ENCODE measurements at regions of chr14 and their contacts with region 1.

Region 1: GRCh38 chr14:93655078-93655750 is 133.1 kb downstream of the PRIMA1 start:
- DNase-seq: peak; percentile 3
- H3K4me3 ChIP-seq: no peak overlapping the region
- CTCF ChIP-seq: peak; percentile 27

Region 2: DNA sequence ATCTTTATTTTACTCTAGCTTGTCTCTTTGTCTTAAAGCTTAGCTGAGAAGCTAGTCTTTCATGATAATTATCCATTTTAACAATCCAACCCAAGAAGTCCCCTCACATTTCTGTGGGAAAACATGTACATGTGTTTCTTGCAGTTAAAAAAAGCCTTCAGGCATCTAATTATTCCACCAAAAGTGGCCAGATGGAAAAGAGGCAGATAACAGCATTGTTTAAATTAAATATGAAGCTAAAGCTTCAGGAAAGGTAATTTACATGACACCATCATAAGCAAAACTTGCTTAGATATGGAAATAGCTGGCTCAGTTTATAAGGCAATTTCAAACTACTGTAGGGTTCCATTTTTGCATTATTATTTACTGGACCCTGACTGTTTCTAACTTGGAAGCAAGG is 49.1 kb before region 1 on chr14:
- CTCF ChIA-PET with region 1: no interaction called
- POLR2A ChIA-PET with region 1: no interaction called
- DNase-seq: no peak
- H3K4me3 ChIP-seq: no peak overlapping the region
- CTCF ChIP-seq: no peak

Region 3: DNA sequence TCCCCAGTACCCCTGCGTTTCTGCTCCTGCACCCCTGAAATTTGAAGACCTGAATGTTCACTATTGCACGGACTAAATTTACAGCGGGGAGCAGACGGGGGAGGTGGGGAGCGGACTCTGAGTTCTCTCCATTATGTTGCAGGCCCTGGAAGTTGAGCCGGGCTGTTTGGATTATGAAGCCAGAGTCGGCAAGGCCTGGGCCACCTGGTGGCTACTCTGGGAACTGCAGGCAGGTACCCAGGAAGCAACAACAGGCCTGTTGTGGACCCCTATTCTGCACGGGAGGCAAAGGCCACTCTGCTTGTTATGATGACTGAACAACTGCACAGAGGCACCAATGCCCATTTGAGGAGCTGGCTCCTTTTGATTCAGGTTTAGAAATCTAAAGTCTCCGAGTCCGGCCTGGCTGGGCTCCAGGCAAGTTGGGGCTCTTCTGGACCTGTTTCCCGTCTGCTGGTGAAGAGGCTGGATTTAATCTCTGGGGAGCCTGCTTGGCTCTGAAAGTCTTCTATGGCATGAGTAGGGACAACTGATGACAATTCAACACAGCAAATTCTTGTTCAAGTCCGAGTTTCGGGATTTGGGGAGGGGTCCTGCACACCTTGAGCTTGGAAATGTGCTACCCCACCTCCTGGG is 237.8 kb after region 1 on chr14:
- CTCF ChIA-PET with region 1: interaction called, 17 read pairs
- POLR2A ChIA-PET with region 1: no interaction called
- DNase-seq: no peak
- H3K4me3 ChIP-seq: no peak overlapping the region
- CTCF ChIP-seq: peak; percentile 97

Region 4: GRCh38 chr14:93903342-93904184 is 248.3 kb after region 1 on chr14:
- CTCF ChIA-PET with region 1: interaction called, 12 read pairs
- POLR2A ChIA-PET with region 1: no interaction called
- DNase-seq: no peak
- H3K4me3 ChIP-seq: no peak overlapping the region
- CTCF ChIP-seq: peak; percentile 44